Sciatic nerve (tissue), 2 donors: ENCODE measurements at regions of chr1 and their contacts with region 1.

Region 1: GRCh38 chr1:20530906-20531305 is 21.5 kb upstream of the FAM43B start:
- DNase-seq: no peak
- ATAC-seq: no peak

Region 2: GRCh38 chr1:19101244-19101643 is 1429.7 kb before region 1 on chr1:
- intact Hi-C with region 1: loop called (anchors 5 kb)
- DNase-seq: no peak
- ATAC-seq: no peak

Region 3: GRCh38 chr1:20430355-20431175 is 100.3 kb before region 1 on chr1:
- intact Hi-C with region 1: no loop called
- DNase-seq: no peak
- ATAC-seq: no peak

Region 4: GRCh38 chr1:20896871-20897223 is 365.9 kb after region 1 on chr1:
- intact Hi-C with region 1: no loop called
- DNase-seq: no peak
- ATAC-seq: no peak